B cell (primary cell): ENCODE measurements at regions of chr19 and their contacts with region 1.

Region 1: GRCh38 chr19:39435499-39436349 is at the start of gene RPS16:
- DNase-seq: peak; percentile 99
- ATAC-seq: peak; percentile 94
- H3K4me3 ChIP-seq: peak within 1 kb of the TSS; percentile 65 to 100 (median 84)
- H3K4me3 Mint-ChIP-seq: peak within 1 kb of the TSS; percentile 100
- H3K27ac ChIP-seq: peak within 1 kb of the TSS; percentile 80 to 93
- H3K27ac Mint-ChIP-seq: peak within 1 kb of the TSS; percentile 100
- H3K4me1 ChIP-seq: peaks cover 29 to 35% of the 10 kb centered on the region in 2 donors
- H3K4me1 Mint-ChIP-seq: peaks cover 47% of the 10 kb centered on the region
- H3K27me3 ChIP-seq: no peaks in the 10 kb centered on the region
- H3K27me3 Mint-ChIP-seq: no peaks in the 10 kb centered on the region
- CTCF ChIP-seq: no peak
- total RNA-seq, gene RPS16: 3,766 and 3,910 TPM in 2 replicates

Region 2: GRCh38 chr19:39125554-39126311 is 310.0 kb before region 1 on chr19 and contains the start of gene PAK4:
- CTCF ChIA-PET with region 1: interaction called, 7 read pairs
- POLR2A ChIA-PET with region 1: no interaction called
- intact Hi-C with region 1: loop called (anchors 1 kb)
- DNase-seq: peak; percentile 95
- ATAC-seq: peak; percentile 97
- H3K4me3 ChIP-seq: peak within 1 kb of the TSS; percentile 63 to 84 (median 74)
- H3K4me3 Mint-ChIP-seq: peak within 1 kb of the TSS; percentile 94
- H3K27ac ChIP-seq: peak within 1 kb of the TSS; percentile 62 to 92
- H3K27ac Mint-ChIP-seq: peak within 1 kb of the TSS; percentile 96
- H3K4me1 ChIP-seq: peaks cover 0 to 26% of the 10 kb centered on the region in 2 donors
- H3K4me1 Mint-ChIP-seq: peaks cover 47% of the 10 kb centered on the region
- H3K27me3 ChIP-seq: peaks cover 0 to 4% (median 2%) of the 10 kb centered on the region in 4 experiments
- H3K27me3 Mint-ChIP-seq: peaks cover 6% of the 10 kb centered on the region
- CTCF ChIP-seq: no peak
- total RNA-seq, gene PAK4: 13.6 and 23.3 TPM in 2 replicates

Region 3: DNA sequence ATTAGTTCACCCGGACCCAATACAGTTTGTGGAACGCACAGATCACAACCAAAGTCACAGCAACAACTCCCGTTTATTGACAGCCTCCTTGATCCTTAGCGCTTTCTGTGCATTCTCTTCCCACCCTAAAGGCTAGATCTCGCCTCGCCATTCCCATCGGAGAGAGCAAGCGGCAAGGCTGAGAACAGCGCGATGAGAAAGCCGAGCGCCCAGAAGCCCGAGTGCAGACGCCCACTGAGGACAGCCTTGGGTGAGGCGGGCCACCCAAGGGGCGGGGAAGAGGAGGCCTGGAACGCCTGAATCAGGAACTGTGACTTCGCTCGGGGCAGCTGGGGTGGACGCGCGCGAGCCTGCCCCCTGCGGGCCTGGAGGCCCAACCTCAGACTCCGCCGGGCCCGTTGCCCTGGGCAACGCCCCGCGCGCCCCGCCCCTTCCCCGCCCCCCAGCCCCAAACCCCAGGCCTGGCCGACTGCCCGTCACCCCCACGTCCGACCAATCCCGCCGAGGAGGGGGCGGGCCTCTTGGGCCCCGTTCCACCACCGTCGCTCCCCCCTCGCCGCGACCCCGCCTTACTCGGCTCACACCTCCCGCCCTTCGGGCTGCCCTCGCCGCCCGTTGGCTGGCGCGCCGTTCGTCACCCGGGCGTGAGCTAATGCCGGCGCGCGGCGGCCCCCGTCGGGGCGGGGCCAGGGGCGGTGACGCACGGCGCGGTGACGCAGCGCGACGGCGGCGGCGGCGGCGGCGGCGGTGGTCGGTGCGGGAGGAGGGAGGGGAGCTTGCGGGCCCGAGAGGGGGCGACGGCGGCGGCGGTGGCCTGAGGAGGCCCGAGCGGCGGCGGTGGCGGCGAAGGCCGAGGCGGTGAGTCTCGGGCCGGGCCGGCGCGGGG is 93.8 kb before region 1 on chr19 and contains the start of gene SAMD4B:
- CTCF ChIA-PET with region 1: no interaction called
- POLR2A ChIA-PET with region 1: interaction called, 10 read pairs
- intact Hi-C with region 1: no loop called
- DNase-seq: peak; percentile 99
- ATAC-seq: peak; percentile 92
- H3K4me3 ChIP-seq: peak within 1 kb of the TSS; percentile 88 to 98 (median 98)
- H3K4me3 Mint-ChIP-seq: peak within 1 kb of the TSS; percentile 97
- H3K27ac ChIP-seq: peak within 1 kb of the TSS; percentile 79 to 86
- H3K27ac Mint-ChIP-seq: peak within 1 kb of the TSS; percentile 95
- H3K4me1 ChIP-seq: peaks cover 32 to 46% of the 10 kb centered on the region in 2 donors
- H3K4me1 Mint-ChIP-seq: peaks cover 65% of the 10 kb centered on the region
- H3K27me3 ChIP-seq: no peaks in the 10 kb centered on the region
- H3K27me3 Mint-ChIP-seq: no peaks in the 10 kb centered on the region
- CTCF ChIP-seq: peak; percentile 81
- total RNA-seq, gene SAMD4B: 90.0 and 96.1 TPM in 2 replicates

Region 4: DNA sequence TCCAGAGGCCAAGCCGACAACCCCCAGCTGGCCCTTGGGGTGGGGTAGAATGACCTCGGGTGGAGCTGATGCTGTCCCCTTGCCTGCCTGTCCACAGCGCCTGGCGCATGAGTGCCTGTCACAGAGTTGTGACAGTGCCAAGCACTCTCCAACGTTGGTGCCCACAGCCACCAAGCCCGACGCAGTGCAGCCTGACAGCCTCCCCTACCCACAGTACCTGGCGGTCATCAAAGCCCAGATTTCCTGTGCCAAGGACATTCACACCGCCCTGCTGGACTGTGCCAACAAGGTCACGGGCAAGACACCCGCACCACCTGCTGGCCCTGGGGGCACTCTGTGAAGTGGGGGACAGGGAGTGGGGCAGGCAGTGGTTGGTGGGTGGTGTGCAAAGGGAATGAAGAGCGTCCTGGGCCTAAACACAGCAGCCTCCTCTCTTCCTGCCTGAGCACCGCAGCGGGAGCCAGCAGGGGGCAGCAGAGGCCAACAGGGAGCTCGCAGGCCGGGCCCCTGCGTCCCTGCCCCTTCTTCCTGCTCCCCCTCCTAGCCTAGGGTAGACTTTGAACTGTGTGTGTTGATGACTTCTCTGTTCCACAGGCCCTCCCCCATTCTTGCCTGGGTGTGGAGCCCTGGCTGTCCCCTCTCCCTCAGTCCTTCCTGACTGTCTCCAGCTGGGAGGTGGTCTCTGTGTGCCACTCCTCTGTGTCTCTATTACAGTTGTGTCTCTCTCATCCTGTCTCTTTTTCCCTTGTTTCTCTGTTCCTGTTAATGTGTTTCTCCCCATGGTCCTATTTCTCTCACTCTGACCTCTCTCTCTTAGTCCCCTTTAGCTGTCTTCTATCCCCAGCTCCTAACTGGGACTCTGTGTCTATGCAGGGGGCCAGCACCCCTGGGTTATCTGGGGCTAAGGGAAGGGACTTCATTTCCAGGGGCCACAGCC is 38.1 kb before region 1 on chr19:
- CTCF ChIA-PET with region 1: interaction called, 28 read pairs
- POLR2A ChIA-PET with region 1: interaction called, 15 read pairs
- intact Hi-C with region 1: no loop called
- DNase-seq: peak; percentile 92
- ATAC-seq: peak; percentile 50
- H3K4me3 ChIP-seq: peak overlapping the region in 4 of 5 experiments; percentile 1 to 21 (median 13)
- H3K4me3 Mint-ChIP-seq: peak overlapping the region; percentile 70
- H3K27ac ChIP-seq: peak overlapping the region; percentile 90 to 100
- H3K27ac Mint-ChIP-seq: peak overlapping the region; percentile 96
- H3K4me1 ChIP-seq: peaks cover 49 to 57% of the 10 kb centered on the region in 2 donors
- H3K4me1 Mint-ChIP-seq: peaks cover 65% of the 10 kb centered on the region
- H3K27me3 ChIP-seq: no peaks in the 10 kb centered on the region
- H3K27me3 Mint-ChIP-seq: no peaks in the 10 kb centered on the region
- CTCF ChIP-seq: peak; percentile 94

Region 5: GRCh38 chr19:39412100-39412866 is 23.4 kb before region 1 on chr19 and contains the start of gene PLEKHG2:
- CTCF ChIA-PET with region 1: interaction called, 23 read pairs
- POLR2A ChIA-PET with region 1: interaction called, 26 read pairs
- intact Hi-C with region 1: loop called (anchors 1 kb)
- DNase-seq: peak; percentile 99
- ATAC-seq: peak; percentile 53
- H3K4me3 ChIP-seq: peak within 1 kb of the TSS; percentile 74 to 98 (median 92)
- H3K4me3 Mint-ChIP-seq: peak within 1 kb of the TSS; percentile 94
- H3K27ac ChIP-seq: peak within 1 kb of the TSS; percentile 100
- H3K27ac Mint-ChIP-seq: peak within 1 kb of the TSS; percentile 99
- H3K4me1 ChIP-seq: peaks cover 24 to 40% of the 10 kb centered on the region in 2 donors
- H3K4me1 Mint-ChIP-seq: peaks cover 49% of the 10 kb centered on the region
- H3K27me3 ChIP-seq: no peaks in the 10 kb centered on the region
- H3K27me3 Mint-ChIP-seq: no peaks in the 10 kb centered on the region
- CTCF ChIP-seq: no peak
- total RNA-seq, gene PLEKHG2: 154 and 167 TPM in 2 replicates

Region 6: DNA sequence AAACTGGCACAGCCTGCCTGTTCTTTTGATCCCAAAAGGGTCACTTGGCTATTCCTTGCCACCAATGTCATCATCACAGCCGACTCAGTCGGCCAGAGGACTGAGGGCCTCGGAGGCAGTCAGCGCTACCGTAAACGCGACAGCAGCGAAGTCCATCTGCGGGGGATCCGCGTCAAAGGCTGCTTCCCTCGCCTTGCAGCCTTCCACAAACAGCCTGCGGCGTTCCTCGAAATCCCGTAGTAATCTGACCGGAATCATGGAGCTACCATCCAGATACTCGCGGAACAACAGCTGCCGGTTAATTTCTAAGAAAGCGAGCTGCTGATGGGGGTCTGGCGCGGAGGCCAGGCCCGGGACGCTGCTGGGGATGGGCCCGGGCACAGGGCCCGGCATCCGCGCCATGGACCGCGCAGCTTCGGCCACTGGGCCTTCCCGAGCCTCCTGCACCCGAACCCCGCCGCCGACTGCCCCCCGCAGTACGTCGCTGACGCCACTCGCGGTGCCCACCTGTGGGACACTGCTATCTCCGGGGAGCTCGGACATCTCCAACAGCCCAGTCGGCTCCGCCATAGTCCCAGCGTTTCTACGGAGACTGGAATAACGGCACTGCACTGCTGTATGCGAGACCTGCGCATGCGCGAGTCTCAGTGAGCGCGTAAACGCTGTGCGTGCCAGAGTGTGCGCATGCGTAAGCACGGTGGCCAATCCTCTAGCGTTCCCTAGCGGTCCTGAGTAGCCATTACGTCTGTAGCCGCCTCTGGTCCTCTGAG is 96.7 kb after region 1 on chr19 and contains the start of gene EID2B:
- CTCF ChIA-PET with region 1: interaction called, 25 read pairs
- POLR2A ChIA-PET with region 1: no interaction called
- intact Hi-C with region 1: loop called (anchors 1 kb)
- DNase-seq: peak; percentile 97
- ATAC-seq: peak; percentile 99
- H3K4me3 ChIP-seq: peak within 1 kb of the TSS; percentile 75 to 98 (median 78)
- H3K4me3 Mint-ChIP-seq: peak within 1 kb of the TSS; percentile 96
- H3K27ac ChIP-seq: peak within 1 kb of the TSS; percentile 37 to 83
- H3K27ac Mint-ChIP-seq: peak within 1 kb of the TSS; percentile 92
- H3K4me1 ChIP-seq: peaks cover 13 to 14% of the 10 kb centered on the region in 2 donors
- H3K4me1 Mint-ChIP-seq: peaks cover 25% of the 10 kb centered on the region
- H3K27me3 ChIP-seq: no peaks in the 10 kb centered on the region
- H3K27me3 Mint-ChIP-seq: no peaks in the 10 kb centered on the region
- CTCF ChIP-seq: peak; percentile 98
- total RNA-seq, gene EID2B: 6.0 and 7.6 TPM in 2 replicates